ENCODE measurements at regions of chr2 and their contacts with region 1.

Region 1: DNA sequence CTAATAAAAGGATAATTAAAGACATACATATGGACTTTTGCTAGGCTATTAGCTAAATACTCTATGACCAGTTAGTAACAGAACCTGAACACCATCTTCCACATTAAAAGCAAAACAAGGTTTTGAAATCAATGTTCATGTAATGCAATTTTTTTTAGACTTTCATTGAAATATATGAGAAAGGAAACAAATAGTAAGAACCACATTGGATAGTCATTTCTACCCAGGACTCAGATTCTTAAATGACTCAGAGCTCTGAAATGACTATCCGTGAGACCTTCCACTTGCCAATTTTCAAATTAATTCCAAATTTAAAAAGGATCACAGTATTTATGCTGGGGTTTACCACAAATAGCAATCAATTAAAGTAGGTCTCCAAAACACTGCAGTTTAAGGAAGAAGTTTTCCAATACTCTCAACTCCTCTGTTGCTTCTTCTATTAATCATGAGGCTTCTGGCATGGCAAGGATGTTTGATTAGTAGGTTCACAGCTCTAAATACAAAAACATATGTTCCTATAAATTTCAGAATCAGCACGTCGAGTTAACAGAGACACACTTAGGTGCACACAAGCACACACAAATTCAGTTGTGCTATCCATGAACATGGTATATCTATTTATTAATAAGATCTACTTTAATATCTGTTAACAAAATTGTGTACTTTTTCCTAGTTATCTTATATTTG is 841.0 kb downstream of the RNF144A start:
- DNase-seq: no peak
- H3K4me3 Mint-ChIP-seq: no peak overlapping the region
- H3K27ac Mint-ChIP-seq: peak overlapping the region; percentile 76
- H3K4me1 Mint-ChIP-seq: peaks cover 22% of the 10 kb centered on the region
- H3K27me3 Mint-ChIP-seq: no peaks in the 10 kb centered on the region

Region 2: DNA sequence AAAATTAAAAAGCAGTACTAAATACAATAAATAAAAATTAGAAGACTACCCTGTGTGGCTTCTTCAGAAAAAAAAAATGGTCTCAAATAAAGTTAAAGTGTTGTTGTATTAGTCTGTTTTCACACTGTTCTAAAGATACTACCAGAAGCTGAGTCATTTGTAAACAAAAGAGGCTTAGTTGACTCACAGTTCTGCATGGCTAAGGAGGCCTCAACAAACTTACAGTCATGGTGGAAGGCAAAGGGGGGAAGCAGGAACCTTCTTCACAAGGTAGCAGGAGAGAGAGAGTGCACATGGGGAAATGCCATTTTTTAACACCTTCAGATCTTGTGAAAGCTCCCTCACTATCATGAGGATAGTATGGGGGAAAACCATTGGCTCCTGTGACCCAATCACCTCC is 228.2 kb before region 1 on chr2:
- intact Hi-C with region 1: loop called (anchors 1 kb)
- DNase-seq: no peak
- H3K4me3 Mint-ChIP-seq: no peak overlapping the region
- H3K27ac Mint-ChIP-seq: peak overlapping the region; percentile 71
- H3K4me1 Mint-ChIP-seq: peaks cover 64% of the 10 kb centered on the region
- H3K27me3 Mint-ChIP-seq: no peaks in the 10 kb centered on the region

Region 3: DNA sequence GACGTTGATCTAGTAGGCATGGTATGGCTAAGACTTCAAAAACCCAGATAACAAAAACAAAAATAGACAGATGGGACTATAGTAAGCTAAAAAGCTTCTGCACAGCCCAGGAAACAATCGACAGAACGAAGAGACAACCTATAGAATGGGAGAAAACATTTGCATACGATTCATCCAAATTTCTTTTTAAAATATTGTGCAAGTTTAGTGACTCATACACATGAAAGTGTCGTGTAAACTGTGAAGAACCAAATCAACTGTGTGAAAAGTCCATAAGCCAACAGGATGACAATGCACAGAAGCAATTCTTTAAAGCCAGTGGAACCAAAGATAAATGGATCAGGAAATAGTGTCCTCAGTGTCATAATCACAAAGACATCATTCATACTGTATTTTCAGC is 169.9 kb before region 1 on chr2:
- intact Hi-C with region 1: loop called (anchors 5 kb)
- DNase-seq: no peak
- H3K4me3 Mint-ChIP-seq: peak overlapping the region; percentile 28
- H3K27ac Mint-ChIP-seq: peak overlapping the region; percentile 61
- H3K4me1 Mint-ChIP-seq: peaks cover 37% of the 10 kb centered on the region
- H3K27me3 Mint-ChIP-seq: no peaks in the 10 kb centered on the region

Region 4: GRCh38 chr2:7725171-7725849 is 32.9 kb before region 1 on chr2:
- intact Hi-C with region 1: loop called (anchors 1 kb)
- DNase-seq: peak; percentile 64
- H3K4me3 Mint-ChIP-seq: peak overlapping the region; percentile 87
- H3K27ac Mint-ChIP-seq: peak overlapping the region; percentile 95
- H3K4me1 Mint-ChIP-seq: peaks cover 73% of the 10 kb centered on the region
- H3K27me3 Mint-ChIP-seq: no peaks in the 10 kb centered on the region

Region 5: DNA sequence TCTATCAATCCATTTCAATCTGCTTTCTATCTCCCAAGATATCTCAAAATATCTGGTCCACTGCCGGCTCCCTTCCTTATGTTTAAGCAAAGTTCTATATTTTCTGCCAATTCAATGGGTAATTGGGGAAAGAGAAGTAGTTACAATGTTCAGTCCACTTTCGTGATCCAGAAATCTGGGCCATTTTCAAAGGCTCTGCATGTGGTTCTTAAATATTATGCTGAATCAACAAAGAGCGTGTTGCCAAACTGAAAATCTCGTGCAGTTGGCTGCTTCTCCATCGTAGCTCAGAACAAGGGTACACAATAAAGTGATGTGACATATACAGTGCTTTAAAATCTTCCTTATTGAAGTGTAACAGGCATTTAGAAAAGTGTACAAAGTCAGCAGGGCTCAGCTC is 22.1 kb after region 1 on chr2:
- intact Hi-C with region 1: no loop called
- DNase-seq: no peak
- H3K4me3 Mint-ChIP-seq: no peak overlapping the region
- H3K27ac Mint-ChIP-seq: no peak overlapping the region
- H3K4me1 Mint-ChIP-seq: peaks cover 4% of the 10 kb centered on the region
- H3K27me3 Mint-ChIP-seq: peaks cover 2% of the 10 kb centered on the region

Region 6: DNA sequence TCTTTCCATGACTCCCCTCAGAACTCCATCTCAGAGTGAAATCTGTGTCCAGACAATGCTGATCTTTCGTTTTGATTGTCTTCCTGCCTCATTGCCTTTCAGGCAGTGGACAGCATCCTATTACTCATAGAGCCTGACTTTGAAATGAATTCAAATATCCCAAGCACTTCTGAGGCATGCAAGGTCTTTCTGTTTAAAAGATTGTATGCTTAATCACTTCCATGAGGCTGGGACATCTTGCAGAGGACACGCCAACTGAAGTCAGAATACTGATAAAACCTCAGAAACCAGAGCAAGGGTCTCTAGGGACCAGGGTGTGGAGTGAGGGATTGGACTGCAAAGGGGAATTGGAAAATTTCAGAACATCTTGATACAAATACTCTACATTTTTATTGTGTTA is 87.1 kb after region 1 on chr2:
- intact Hi-C with region 1: loop called (anchors 1 kb)
- DNase-seq: no peak
- H3K4me3 Mint-ChIP-seq: no peak overlapping the region
- H3K27ac Mint-ChIP-seq: no peak overlapping the region
- H3K4me1 Mint-ChIP-seq: peaks cover 57% of the 10 kb centered on the region
- H3K27me3 Mint-ChIP-seq: no peaks in the 10 kb centered on the region

Region 7: GRCh38 chr2:8049851-8050571 is 291.8 kb after region 1 on chr2:
- intact Hi-C with region 1: loop called (anchors 1 kb)
- DNase-seq: peak; percentile 52
- H3K4me3 Mint-ChIP-seq: peak overlapping the region; percentile 43
- H3K27ac Mint-ChIP-seq: peak overlapping the region; percentile 93
- H3K4me1 Mint-ChIP-seq: peaks cover 48% of the 10 kb centered on the region
- H3K27me3 Mint-ChIP-seq: no peaks in the 10 kb centered on the region

Region 8: GRCh38 chr2:8303322-8303832 is 545.2 kb after region 1 on chr2:
- intact Hi-C with region 1: loop called (anchors 2 kb)
- DNase-seq: peak; percentile 77
- H3K4me3 Mint-ChIP-seq: peak overlapping the region; percentile 65
- H3K27ac Mint-ChIP-seq: peak overlapping the region; percentile 85
- H3K4me1 Mint-ChIP-seq: peaks cover 91% of the 10 kb centered on the region
- H3K27me3 Mint-ChIP-seq: peaks cover 7% of the 10 kb centered on the region